ENCODE measurements at regions of chr5 and their contacts with region 1.

Region 1: GRCh38 chr5:73088026-73088425 is 32.3 kb upstream of the TMEM171 start:
- DNase-seq: no peak
- H3K4me3 Mint-ChIP-seq: no peak overlapping the region
- H3K27ac Mint-ChIP-seq: peak overlapping the region; percentile 60
- H3K4me1 Mint-ChIP-seq: peaks cover 25% of the 10 kb centered on the region
- H3K27me3 Mint-ChIP-seq: no peaks in the 10 kb centered on the region
- CTCF ChIP-seq: no peak

Region 2: DNA sequence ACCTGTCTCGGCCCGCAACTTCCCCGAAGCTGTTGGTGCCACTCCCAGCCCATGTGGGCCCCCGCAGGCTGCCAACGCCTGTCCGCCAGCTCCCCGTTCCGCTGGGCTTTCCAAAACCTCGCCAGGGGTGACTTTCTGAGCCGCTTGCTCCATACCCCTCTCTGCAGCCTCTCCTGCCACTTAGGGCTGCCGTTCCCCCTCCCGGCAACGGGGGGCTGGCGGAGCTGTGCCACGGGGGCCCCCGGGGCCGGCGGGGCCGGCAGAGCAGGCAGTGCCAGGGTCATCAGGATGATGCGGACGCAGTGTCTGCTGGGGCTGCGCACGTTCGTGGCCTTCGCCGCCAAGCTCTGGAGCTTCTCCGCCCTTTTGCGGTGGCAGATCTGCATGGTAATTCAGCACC is 91.4 kb before region 1 on chr5:
- CTCF ChIA-PET with region 1: no interaction called
- intact Hi-C with region 1: no loop called
- DNase-seq: no peak
- H3K4me3 Mint-ChIP-seq: no peak overlapping the region
- H3K27ac Mint-ChIP-seq: no peak overlapping the region
- H3K4me1 Mint-ChIP-seq: no peaks in the 10 kb centered on the region
- H3K27me3 Mint-ChIP-seq: no peaks in the 10 kb centered on the region
- CTCF ChIP-seq: no peak

Region 3: DNA sequence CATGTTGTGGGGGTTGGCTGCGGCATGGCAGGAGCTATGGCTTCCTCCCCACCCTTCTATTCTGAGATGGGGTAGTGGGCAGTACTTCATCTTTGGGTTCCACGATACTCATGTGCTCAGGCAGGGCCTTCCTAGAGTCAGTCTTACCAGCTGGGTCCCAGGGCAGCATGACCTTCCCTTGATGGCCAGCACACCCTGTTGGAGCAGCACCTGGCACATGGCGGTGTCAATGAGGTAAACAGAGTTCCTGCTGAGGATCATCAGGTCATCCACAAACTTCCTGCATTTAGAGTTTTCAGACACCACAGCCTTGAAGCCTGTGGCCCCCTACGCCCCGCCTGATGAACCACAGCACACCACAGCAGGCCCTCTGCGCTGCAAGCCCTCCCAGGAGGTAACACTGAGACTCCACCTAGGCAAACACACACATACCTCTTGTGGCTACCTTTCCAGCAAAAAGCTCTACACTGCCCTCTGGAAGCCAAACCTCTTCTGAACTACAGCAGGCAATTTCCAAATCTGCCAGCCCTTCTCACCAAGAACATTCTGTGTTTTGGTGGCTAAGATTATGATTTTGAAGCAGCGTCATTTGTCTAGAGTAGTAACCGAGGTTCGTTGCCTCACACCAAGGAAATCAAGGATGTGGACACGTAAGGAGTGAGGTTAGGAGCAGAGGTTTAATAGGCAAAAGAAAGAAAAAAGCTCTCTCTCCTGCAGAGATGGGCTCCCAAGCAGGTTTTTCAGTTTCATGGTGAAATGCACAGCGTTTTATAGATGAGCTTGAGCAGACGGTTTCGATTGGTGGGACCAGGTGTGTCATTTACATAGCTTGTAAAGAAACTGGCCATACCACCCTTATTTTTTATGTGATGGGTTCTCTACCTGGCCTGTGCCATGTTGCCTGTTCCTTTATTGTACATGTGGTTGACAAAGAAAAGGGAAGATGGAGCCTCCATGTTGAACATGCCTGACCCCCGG is 64.7 kb after region 1 on chr5:
- CTCF ChIA-PET with region 1: interaction called, 3 read pairs
- intact Hi-C with region 1: loop called (anchors 1 kb)
- DNase-seq: peak; percentile 47
- H3K4me3 Mint-ChIP-seq: no peak overlapping the region
- H3K27ac Mint-ChIP-seq: no peak overlapping the region
- H3K4me1 Mint-ChIP-seq: no peaks in the 10 kb centered on the region
- H3K27me3 Mint-ChIP-seq: no peaks in the 10 kb centered on the region
- CTCF ChIP-seq: no peak

Region 4: DNA sequence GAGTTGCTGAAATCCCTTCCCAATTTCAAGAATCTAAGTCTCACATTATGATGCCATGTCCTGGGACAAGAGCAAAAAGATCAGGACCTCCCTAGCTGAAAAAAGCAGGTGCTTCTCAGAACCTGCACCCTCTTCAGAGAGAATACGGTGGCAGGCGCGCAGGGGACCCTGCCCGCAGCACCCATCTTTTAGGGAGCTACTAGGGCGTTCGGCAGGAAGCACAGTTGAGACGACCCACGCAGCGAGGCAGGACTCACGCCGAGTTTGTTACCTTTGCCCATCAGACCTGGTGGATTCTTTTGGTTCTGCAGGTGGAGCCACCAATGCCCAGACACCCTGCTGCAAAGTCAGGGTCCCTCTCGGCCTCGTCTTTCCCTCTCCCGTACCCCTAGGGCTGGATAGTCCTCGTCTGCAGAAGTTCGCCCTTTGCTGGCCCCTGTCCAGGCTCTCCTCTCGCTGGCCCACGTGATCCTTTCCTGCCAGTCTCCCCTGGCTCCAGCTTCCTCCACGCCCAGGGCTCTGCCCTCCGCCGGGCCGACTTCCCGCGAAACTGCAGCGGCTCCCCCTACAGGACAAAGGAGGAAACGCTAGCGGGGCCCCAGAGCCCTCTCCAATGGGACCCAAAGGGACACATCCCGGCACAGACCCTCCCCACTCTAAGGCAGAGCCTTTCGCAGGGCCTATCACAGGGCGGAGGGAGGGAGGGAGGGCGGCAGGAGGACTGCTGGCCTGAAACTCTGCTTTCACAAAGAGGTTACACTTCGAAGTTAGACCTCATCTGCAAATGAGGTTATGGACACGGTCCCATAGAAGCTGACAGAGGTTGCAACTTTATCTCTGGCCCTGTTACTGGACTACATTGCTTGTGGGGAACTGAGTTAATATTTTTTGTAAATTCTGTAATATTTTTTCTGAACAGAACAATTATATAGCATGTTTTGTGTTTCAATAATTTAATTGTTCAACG is 113.8 kb after region 1 on chr5:
- CTCF ChIA-PET with region 1: interaction called, 17 read pairs
- intact Hi-C with region 1: loop called (anchors 1 kb)
- DNase-seq: peak; percentile 98
- H3K4me3 Mint-ChIP-seq: peak overlapping the region; percentile 76
- H3K27ac Mint-ChIP-seq: peak overlapping the region; percentile 35
- H3K4me1 Mint-ChIP-seq: peaks cover 13% of the 10 kb centered on the region
- H3K27me3 Mint-ChIP-seq: peaks cover under 1% of the 10 kb centered on the region
- CTCF ChIP-seq: peak; percentile 92

Region 5: GRCh38 chr5:73540192-73540591 is 452.2 kb after region 1 on chr5:
- CTCF ChIA-PET with region 1: no interaction called
- intact Hi-C with region 1: no loop called
- DNase-seq: peak; percentile 35
- H3K4me3 Mint-ChIP-seq: no peak overlapping the region
- H3K27ac Mint-ChIP-seq: peak overlapping the region; percentile 80
- H3K4me1 Mint-ChIP-seq: peaks cover 49% of the 10 kb centered on the region
- H3K27me3 Mint-ChIP-seq: no peaks in the 10 kb centered on the region
- CTCF ChIP-seq: no peak